Panc1 (cell line): ENCODE measurements at regions of chrX and their contacts with region 1.

Region 1: DNA sequence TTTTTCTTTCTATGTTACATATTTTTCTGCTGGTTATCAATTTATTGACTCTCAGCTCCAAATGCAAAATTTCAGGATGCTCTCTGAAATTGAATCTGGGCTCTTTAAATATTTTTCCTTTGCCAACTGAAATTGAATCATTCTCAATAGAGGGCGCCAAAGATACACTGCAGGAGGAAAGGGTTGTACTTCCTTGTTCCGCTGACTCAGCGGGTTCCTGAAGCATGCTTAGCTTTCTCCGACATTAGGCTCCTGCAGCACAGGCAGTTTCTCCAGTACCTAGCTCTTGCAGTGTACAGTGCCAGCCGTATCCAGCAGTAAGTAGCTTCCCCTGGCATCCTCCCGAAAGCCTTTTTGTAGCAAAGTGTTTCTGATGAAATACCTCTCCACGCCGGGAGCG is 28.8 kb upstream of the CFAP47 start:
- DNase-seq: peak; percentile 0
- ATAC-seq: no peak
- H3K4me3 ChIP-seq: no peak overlapping the region
- H3K27ac ChIP-seq: no peak overlapping the region
- H3K4me1 ChIP-seq: no peaks in the 10 kb centered on the region
- H3K27me3 ChIP-seq: no peaks in the 10 kb centered on the region
- CTCF ChIP-seq: peak; percentile 69

Region 2: DNA sequence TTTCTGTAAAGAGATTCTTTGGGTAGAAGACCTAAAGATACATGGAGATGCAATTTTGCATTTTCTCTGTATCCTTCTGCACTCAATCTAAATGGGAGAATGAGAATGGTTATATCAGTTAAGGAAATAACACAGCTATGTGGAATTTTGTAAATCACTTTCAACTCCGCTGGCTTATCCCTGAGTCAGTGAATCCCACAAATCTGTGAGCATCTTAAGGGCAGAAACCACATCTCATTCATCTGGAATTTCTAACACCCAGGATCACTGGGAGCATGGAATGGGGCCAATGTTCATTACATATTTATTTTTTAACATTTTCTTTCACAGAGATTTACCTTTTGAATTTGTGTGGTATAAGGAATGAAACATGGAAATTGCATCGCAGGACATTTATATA is 196.7 kb after region 1 on chrX:
- CTCF ChIA-PET with region 1: no interaction called
- POLR2A ChIA-PET with region 1: no interaction called
- in situ Hi-C with region 1: no loop called
- intact Hi-C with region 1: no loop called
- DNase-seq: no peak
- ATAC-seq: no peak
- H3K4me3 ChIP-seq: no peak overlapping the region
- H3K27ac ChIP-seq: no peak overlapping the region
- H3K4me1 ChIP-seq: no peaks in the 10 kb centered on the region
- H3K27me3 ChIP-seq: no peaks in the 10 kb centered on the region
- CTCF ChIP-seq: no peak

Region 3: GRCh38 chrX:36867143-36867542 is 976.4 kb after region 1 on chrX:
- CTCF ChIA-PET with region 1: no interaction called
- POLR2A ChIA-PET with region 1: no interaction called
- in situ Hi-C with region 1: no loop called
- intact Hi-C with region 1: loop called (anchors 10 kb)
- DNase-seq: no peak
- ATAC-seq: no peak
- H3K4me3 ChIP-seq: no peak overlapping the region
- H3K27ac ChIP-seq: no peak overlapping the region
- H3K4me1 ChIP-seq: no peaks in the 10 kb centered on the region
- H3K27me3 ChIP-seq: no peaks in the 10 kb centered on the region
- CTCF ChIP-seq: peak; percentile 48; the same call in 1 of the 2 replicates